ENCODE measurements at regions of chr4 and their contacts with region 1.

Region 1: GRCh38 chr4:41661442-41662076 is 87.0 kb downstream of the PHOX2B start:
- DNase-seq: peak; percentile 52
- H3K4me3 Mint-ChIP-seq: no peak overlapping the region
- H3K27ac Mint-ChIP-seq: no peak overlapping the region
- H3K4me1 Mint-ChIP-seq: no peaks in the 10 kb centered on the region
- H3K27me3 Mint-ChIP-seq: peaks cover 11% of the 10 kb centered on the region

Region 2: GRCh38 chr4:41257257-41257901 is 404.2 kb before region 1 on chr4:
- CTCF ChIA-PET with region 1: interaction called, 12 read pairs
- DNase-seq: peak; percentile 31
- H3K4me3 Mint-ChIP-seq: peak overlapping the region; percentile 40
- H3K27ac Mint-ChIP-seq: no peak overlapping the region
- H3K4me1 Mint-ChIP-seq: peaks cover 5% of the 10 kb centered on the region
- H3K27me3 Mint-ChIP-seq: peaks cover 50% of the 10 kb centered on the region

Region 3: DNA sequence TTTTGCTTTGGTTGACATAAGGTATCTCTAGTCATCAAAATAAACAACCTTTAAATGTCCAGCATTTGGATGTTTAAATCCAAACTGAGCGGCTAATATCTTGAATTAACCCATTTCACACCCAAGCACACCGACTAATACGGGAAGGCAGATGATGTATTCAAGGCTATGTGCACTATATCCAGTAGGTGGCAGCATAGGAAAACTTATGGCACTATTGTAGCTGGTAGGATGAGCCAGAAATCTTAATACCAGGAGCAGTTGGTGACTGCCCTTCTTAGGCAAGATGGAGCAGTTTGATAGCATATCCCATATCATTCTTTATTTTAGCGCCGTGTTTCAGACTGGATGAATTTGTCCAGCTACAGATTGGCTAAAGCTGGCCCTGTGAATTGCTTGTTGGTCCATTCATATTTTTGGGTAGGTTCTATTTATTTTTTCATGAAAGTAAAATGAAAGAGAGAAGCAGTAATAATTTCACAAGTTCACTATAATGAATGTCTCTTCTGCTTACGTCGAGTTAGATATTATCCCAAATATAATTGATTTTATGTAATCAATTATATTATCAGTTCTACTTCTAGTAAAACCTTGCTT is 380.4 kb before region 1 on chr4:
- CTCF ChIA-PET with region 1: interaction called, 43 read pairs
- DNase-seq: peak; percentile 29
- H3K4me3 Mint-ChIP-seq: no peak overlapping the region
- H3K27ac Mint-ChIP-seq: no peak overlapping the region
- H3K4me1 Mint-ChIP-seq: no peaks in the 10 kb centered on the region
- H3K27me3 Mint-ChIP-seq: peaks cover 4% of the 10 kb centered on the region

Measured in activated naive CD4-positive, alpha-beta T cell treated with anti-CD3 and anti-CD28 coated beads, Interleukin-2, amount 10 ng/mL, durations not matched to agents 7 days and 5 days (primary cell).